CD4-positive, alpha-beta T cell (primary cell): ENCODE measurements at regions of chr16 and their contacts with region 1.

Region 1: DNA sequence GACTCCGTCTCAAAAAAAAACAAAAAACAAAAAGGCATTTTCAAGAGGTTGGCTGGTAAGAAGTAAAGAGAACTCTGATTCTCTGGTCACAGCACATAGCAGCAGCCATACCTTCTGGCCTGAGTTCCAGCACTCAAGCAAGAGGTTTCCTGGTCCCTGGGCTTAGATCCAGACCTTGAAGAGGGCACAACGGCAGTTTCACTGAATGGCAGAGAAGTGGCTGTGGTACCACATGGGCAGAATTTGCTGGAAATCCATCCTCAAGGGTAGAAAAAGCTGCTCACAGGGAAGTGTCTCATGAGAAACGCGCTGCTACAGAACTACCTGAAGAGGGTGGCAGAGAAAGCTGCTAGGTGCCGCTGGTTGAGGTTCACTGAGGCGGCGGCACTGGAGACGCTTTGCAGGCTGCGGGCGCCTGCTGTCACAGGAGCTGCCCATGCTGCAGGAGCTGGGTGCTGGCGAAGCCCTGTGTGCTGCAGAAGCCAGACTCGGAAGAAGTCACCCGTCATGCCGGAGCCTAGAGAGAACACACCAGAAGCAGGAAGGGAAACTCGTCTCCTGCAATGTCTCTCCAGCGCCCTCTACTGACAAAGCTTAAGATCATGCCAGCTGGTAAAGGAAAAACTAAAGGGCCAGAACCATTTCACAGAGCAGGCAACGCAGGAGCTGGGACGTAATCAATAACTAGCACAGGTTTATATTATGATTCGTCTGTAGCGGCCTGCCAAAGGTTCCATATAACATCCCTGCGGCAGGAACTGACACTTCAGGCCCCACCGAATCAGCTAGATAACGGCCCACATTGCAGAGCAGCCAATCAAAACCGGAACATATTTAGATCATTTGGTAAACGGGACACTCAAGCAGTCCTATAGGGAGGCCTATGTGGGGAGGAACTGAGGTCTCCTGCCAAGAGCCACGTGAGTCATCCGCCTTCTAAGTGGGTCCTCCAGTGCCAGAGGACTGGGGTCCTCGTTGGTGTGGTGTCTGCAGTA is 5.4 kb upstream of the ZNF213 start:
- DNase-seq: peak; percentile 62 to 95 (median 74)
- ATAC-seq: peak; percentile 79
- H3K4me3 ChIP-seq: peak overlapping the region; percentile 75
- H3K4me3 Mint-ChIP-seq: peak overlapping the region; percentile 91
- H3K27ac ChIP-seq: peak overlapping the region; percentile 35 to 38
- H3K27ac Mint-ChIP-seq: peak overlapping the region; percentile 84
- H3K4me1 ChIP-seq: peaks cover 53% of the 10 kb centered on the region
- H3K4me1 Mint-ChIP-seq: peaks cover 63% of the 10 kb centered on the region
- H3K27me3 ChIP-seq: no peaks in the 10 kb centered on the region
- H3K27me3 Mint-ChIP-seq: no peaks in the 10 kb centered on the region
- CTCF ChIP-seq: peak; percentile 93

Region 2: GRCh38 chr16:3003582-3004302 is 125.7 kb before region 1 on chr16:
- CTCF ChIA-PET with region 1: interaction called, 13 read pairs
- POLR2A ChIA-PET with region 1: interaction called, 4 read pairs
- intact Hi-C with region 1: no loop called
- DNase-seq: peak; percentile 90 to 99 (median 95)
- ATAC-seq: peak; percentile 99
- H3K4me3 ChIP-seq: no peak overlapping the region
- H3K4me3 Mint-ChIP-seq: peak overlapping the region; percentile 67
- H3K27ac ChIP-seq: no peak overlapping the region
- H3K27ac Mint-ChIP-seq: peak overlapping the region; percentile 13
- H3K4me1 ChIP-seq: peaks cover 32% of the 10 kb centered on the region
- H3K4me1 Mint-ChIP-seq: peaks cover 31% of the 10 kb centered on the region
- H3K27me3 ChIP-seq: peaks cover 0 to 3% of the 10 kb centered on the region in 2 experiments
- H3K27me3 Mint-ChIP-seq: peaks cover 27% of the 10 kb centered on the region
- CTCF ChIP-seq: peak; percentile 64

Region 3: GRCh38 chr16:3035302-3036234 is 93.9 kb before region 1 on chr16:
- CTCF ChIA-PET with region 1: interaction called, 23 read pairs
- POLR2A ChIA-PET with region 1: interaction called, 20 read pairs
- intact Hi-C with region 1: no loop called
- DNase-seq: peak in 1 of 14 experiments; percentile 23
- ATAC-seq: no peak
- H3K4me3 ChIP-seq: no peak overlapping the region
- H3K4me3 Mint-ChIP-seq: no peak overlapping the region
- H3K27ac ChIP-seq: no peak overlapping the region
- H3K27ac Mint-ChIP-seq: no peak overlapping the region
- H3K4me1 ChIP-seq: peaks cover 19% of the 10 kb centered on the region
- H3K4me1 Mint-ChIP-seq: peaks cover 17% of the 10 kb centered on the region
- H3K27me3 ChIP-seq: peaks cover 71 to 81% of the 10 kb centered on the region in 2 experiments
- H3K27me3 Mint-ChIP-seq: peaks cover 81% of the 10 kb centered on the region
- CTCF ChIP-seq: no peak

Region 4: DNA sequence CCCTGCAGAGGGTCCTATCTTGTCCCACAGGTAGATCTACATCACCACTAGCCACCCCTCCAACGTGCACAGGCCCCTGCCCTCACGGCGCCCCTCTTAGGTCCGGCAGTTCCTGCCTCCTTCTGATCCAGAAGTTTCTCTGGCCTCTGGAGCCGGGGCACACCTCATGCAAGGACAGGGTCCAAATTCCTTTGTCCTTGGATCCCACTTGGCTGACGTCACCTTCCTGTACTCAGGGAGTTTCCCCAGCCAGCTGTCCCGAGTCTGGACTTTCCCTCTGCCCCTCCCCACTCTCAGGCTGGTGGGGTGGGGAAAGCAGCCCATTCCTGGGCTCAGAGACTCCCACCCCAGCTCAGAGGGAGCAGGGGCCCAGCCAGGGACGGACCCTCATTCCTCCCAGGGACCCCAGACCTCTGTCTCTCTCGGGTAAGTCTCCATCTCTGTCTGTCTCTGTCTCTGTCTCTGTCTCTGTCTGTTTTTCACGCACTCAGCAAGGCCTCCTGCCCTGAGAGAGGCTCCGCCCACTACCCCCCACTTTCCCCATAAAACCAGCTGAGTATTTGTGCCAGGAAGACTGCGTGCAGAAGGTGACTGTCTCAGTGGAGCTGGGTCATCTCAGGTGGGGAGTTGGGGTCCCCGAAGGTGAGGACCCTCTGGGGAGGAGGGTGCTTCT is 64.2 kb before region 1 on chr16 and contains the start of gene IL32:
- CTCF ChIA-PET with region 1: interaction called, 62 read pairs
- POLR2A ChIA-PET with region 1: interaction called, 70 read pairs
- intact Hi-C with region 1: no loop called
- DNase-seq: peak; percentile 46 to 88 (median 68)
- ATAC-seq: peak; percentile 65
- H3K4me3 ChIP-seq: peak within 1 kb of the TSS; percentile 99
- H3K4me3 Mint-ChIP-seq: peak within 1 kb of the TSS; percentile 99
- H3K27ac ChIP-seq: peak within 1 kb of the TSS; percentile 85 to 98
- H3K27ac Mint-ChIP-seq: peak within 1 kb of the TSS; percentile 97
- H3K4me1 ChIP-seq: peaks cover 78% of the 10 kb centered on the region
- H3K4me1 Mint-ChIP-seq: peaks cover 67% of the 10 kb centered on the region
- H3K27me3 ChIP-seq: no peaks in the 10 kb centered on the region
- H3K27me3 Mint-ChIP-seq: no peaks in the 10 kb centered on the region
- CTCF ChIP-seq: no peak
- total RNA-seq, gene IL32: 378 to 383 TPM

Region 5: DNA sequence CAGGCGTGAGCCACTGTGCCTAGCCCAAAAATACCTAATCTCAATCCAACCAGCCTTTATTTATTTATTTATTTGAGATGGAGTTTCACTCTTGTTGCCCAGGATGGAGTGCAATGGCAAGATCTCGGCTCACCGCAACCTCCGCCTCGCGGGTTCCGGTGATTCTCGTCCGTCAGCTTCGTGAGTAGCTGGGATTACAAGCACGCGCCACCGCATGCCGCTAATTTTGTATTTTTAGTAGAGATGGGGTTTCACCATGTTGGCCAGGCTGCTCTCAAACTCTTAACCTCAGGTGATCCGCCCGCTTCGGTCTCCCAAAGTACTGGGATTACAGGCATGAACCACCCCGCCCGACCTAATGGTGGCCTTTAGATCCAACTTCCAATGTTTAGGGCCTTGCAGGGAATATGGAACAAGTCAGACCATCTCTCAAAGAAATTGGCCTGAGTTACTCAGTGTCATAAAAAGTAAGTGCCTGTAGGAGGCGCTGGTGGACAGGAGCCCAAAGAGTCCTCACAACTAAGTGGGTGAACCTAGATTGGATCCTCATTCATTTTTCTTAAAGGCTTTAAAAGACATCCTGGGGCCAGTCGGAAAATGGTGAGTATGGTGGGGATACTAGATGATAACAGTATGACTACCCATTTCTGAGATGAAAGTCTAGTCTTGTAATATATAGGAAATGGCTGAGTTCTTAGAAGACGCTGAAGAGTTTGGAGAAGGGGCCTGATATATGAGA is 35.0 kb before region 1 on chr16:
- CTCF ChIA-PET with region 1: interaction called, 30 read pairs
- POLR2A ChIA-PET with region 1: interaction called, 19 read pairs
- intact Hi-C with region 1: loop called (anchors 1 kb)
- DNase-seq: peak in 10 of 14 experiments; percentile 24 to 83 (median 48)
- ATAC-seq: peak; percentile 55
- H3K4me3 ChIP-seq: no peak overlapping the region
- H3K4me3 Mint-ChIP-seq: peak overlapping the region; percentile 3
- H3K27ac ChIP-seq: no peak overlapping the region
- H3K27ac Mint-ChIP-seq: peak overlapping the region; percentile 51
- H3K4me1 ChIP-seq: peaks cover 68% of the 10 kb centered on the region
- H3K4me1 Mint-ChIP-seq: peaks cover 50% of the 10 kb centered on the region
- H3K27me3 ChIP-seq: no peaks in the 10 kb centered on the region
- H3K27me3 Mint-ChIP-seq: no peaks in the 10 kb centered on the region
- CTCF ChIP-seq: peak; percentile 61

Region 6: GRCh38 chr16:3106205-3106928 is 23.1 kb before region 1 on chr16:
- CTCF ChIA-PET with region 1: interaction called, 28 read pairs
- POLR2A ChIA-PET with region 1: interaction called, 6 read pairs
- intact Hi-C with region 1: loop called (anchors 1 to 2 kb)
- DNase-seq: peak; percentile 79 to 95 (median 87)
- ATAC-seq: peak; percentile 85
- H3K4me3 ChIP-seq: peak overlapping the region; percentile 82
- H3K4me3 Mint-ChIP-seq: peak overlapping the region; percentile 93
- H3K27ac ChIP-seq: peak overlapping the region; percentile 83 to 85
- H3K27ac Mint-ChIP-seq: peak overlapping the region; percentile 76
- H3K4me1 ChIP-seq: peaks cover 27% of the 10 kb centered on the region
- H3K4me1 Mint-ChIP-seq: peaks cover 42% of the 10 kb centered on the region
- H3K27me3 ChIP-seq: no peaks in the 10 kb centered on the region
- H3K27me3 Mint-ChIP-seq: no peaks in the 10 kb centered on the region
- CTCF ChIP-seq: no peak

Region 7: DNA sequence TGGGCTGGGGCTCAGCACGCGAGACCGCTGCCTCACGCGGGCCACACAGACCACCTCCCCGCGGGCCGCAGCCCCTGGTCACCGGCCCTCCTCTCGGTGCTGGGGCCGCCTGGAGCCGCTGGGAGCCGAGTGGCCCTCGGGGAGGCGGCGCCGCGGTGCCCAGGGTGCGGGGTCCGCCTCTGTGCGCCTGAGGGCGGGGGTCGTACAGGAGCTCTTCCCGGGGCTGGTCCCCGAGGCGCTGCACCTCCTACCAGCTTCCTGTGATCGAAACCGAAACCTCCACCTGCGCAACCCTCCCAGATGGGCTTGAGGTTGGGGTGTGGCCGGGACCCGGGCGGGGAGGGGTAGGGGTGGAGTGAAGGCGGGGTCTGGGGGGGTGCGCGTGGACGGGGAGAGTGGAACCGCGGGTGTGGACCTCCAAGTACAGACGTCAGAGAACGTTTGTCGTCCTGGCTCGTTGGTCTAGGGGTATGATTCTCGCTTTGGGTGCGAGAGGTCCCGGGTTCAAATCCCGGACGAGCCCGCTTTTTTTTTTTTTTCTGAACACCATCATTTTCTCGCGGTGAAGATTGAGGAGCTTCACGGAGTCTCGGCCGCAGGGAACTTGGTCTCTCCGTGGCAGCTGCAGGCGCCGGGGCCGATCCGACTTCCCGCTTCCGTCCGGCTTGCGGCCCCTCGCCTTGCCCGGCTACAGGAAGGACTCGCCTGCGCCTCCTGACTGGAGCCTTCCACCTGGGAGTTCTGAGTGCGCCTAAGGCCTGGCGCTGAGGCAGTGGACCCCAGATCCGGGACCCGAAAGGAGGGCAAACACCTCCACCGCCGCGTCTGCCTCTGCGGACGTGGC is 29.3 kb after region 1 on chr16:
- CTCF ChIA-PET with region 1: interaction called, 15 read pairs
- POLR2A ChIA-PET with region 1: interaction called, 27 read pairs
- intact Hi-C with region 1: loop called (anchors 2 kb)
- DNase-seq: peak; percentile 92 to 98 (median 94)
- ATAC-seq: peak; percentile 89
- H3K4me3 ChIP-seq: peak overlapping the region; percentile 85
- H3K4me3 Mint-ChIP-seq: peak overlapping the region; percentile 97
- H3K27ac ChIP-seq: peak overlapping the region; percentile 39 to 55
- H3K27ac Mint-ChIP-seq: peak overlapping the region; percentile 97
- H3K4me1 ChIP-seq: peaks cover 28% of the 10 kb centered on the region
- H3K4me1 Mint-ChIP-seq: peaks cover 18% of the 10 kb centered on the region
- H3K27me3 ChIP-seq: no peaks in the 10 kb centered on the region
- H3K27me3 Mint-ChIP-seq: peaks cover 7% of the 10 kb centered on the region
- CTCF ChIP-seq: no peak